Right ventricle myocardium inferior (tissue), 1 donor: ENCODE measurements at regions of chr2 and their contacts with region 1.

Region 1: GRCh38 chr2:74482801-74483674 is at the starts of genes CCDC142 and TTC31:
- DNase-seq: peak; percentile 97
- ATAC-seq: peak; percentile 99
- total RNA-seq, gene CCDC142: 8.3 TPM
- total RNA-seq, gene TTC31: 12.2 TPM

Region 2: DNA sequence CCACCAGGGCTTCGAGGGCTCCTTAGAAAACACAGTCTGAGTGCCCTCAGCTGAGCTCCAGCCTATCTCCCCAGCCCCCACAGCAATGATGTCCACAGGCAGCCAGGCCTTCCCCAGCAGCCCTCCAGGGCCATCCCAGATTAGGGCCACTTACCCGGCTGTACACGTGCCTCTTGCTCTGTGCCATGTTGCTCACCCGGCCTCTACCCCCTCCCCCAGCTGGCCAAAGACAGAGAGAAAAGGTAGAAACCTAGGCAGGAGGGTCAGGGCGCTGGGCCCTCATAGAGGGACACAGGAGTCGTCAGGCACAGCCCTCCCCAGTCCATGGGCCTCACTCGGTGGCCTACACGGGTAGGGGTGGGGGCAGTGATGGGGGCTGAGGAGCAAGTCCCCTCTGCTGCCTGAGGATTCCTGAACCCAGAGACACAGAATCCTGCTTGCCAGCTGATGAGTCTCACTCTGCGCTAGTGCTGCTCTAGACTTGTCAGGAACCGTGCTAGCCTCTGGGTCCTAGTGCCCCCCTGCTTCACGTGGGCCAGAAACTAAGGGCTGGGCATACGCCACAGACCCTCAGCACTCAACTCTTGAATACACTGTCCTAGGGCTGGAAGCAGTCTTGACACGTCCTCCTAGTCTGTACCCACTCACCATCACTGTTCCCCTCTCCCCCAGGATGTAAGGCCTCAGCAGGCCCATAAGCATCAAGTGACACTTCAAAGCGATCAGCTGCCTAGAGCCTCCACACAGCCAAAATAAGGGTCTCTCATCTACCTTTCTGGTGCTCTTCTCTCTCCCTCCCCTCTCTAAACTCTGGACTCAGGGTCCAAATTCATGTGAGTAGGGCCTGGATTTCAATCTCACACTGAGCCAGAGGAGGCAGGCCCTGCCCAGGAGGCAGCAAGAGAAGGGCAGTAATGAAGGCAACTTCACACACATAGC is 102.9 kb before region 1 on chr2 and contains the start of gene DCTN1:
- intact Hi-C with region 1: no loop called
- DNase-seq: no peak
- ATAC-seq: peak; percentile 75
- total RNA-seq, gene DCTN1: 182 TPM

Region 3: GRCh38 chr2:74454654-74455511 is 28.2 kb before region 1 on chr2 and contains the start of gene INO80B:
- intact Hi-C with region 1: loop called (anchors 2 kb)
- DNase-seq: peak; percentile 95
- ATAC-seq: peak; percentile 68
- total RNA-seq, gene INO80B: 15.7 TPM

Region 4: GRCh38 chr2:74529357-74530238 is 46.6 kb after region 1 on chr2 and contains the starts of genes AUP1 and HTRA2:
- intact Hi-C with region 1: loop called (anchors 2 kb)
- DNase-seq: peak; percentile 99
- ATAC-seq: peak; percentile 97
- total RNA-seq, gene AUP1: 53.7 TPM
- total RNA-seq, gene HTRA2: 29.2 TPM

Region 5: DNA sequence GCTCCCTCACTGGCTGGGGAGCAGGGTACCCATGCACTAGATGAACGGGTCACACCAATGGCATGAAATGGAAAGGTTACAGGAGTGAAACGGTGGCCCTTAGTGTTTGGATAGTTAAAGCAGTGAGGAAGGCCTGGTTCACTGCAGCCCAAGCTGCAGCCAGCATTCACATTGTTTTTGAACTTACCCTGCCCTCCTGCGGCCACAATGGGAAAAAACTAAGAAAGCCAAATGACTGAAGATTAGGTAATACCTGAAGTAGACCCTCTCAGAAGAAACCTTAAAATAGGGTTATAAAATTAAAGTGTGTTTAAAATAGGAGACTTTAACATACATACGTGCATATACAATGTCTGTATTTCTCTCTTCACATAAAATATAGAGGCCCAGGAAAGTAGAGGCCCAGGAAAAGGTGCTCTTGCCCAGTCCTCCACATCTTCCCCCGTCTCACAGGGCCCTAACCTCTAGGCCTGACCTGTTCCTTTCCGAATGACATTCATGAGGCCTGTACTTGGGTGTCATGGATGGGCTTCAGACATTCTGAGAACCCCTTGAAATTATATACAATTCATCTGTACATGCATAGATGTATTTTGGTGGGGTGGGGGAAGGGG is 104.7 kb after region 1 on chr2:
- intact Hi-C with region 1: loop called (anchors 1 kb)
- DNase-seq: peak; percentile 64
- ATAC-seq: peak; percentile 87

Region 6: GRCh38 chr2:74619651-74620297 is 136.7 kb after region 1 on chr2:
- intact Hi-C with region 1: no loop called
- DNase-seq: no peak
- ATAC-seq: no peak

Region 7: DNA sequence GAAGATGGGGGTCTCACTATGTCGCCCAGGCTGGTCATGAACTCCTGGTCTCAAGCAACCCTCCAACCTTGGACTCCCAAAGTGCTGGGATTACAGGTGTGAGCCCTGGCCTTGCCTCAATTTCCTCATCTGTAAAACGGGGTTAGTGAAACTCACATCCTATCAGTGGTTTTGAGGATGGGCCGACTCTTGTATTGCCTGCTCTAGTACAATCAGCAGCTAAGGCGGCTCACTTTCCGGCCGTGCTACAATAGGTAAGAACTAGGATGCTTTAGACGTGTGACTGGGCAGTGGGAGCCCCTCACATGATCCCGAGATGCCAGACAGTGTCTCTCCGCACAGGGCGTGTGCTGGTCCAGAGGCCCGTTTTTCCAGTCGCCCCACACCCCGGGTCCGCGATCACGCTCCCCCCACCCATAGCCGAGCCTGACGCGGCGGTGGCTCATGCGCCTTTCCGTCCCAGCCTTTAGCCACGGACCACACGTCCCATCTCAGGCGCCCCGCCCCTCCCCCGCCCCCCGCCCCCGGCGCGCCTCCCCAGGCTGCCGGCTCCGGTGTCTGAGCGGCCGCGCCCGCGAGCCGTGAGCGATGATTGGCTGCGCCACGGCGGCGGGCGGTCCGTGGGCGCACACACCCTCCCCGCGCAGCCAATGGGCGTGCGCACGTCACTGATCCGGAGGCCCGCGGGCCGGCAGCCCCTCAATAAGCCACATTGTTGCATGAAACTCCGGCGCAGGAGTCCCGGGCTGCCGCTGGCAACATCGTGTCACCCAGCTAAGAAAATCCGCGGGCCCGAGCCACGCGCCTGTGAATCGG is 350.6 kb after region 1 on chr2 and contains the start of gene HK2:
- intact Hi-C with region 1: no loop called
- DNase-seq: peak; percentile 95
- ATAC-seq: peak; percentile 98
- total RNA-seq, gene HK2: 5.4 TPM

Region 8: GRCh38 chr2:74935975-74936391 is 452.9 kb after region 1 on chr2:
- intact Hi-C with region 1: no loop called
- DNase-seq: no peak
- ATAC-seq: no peak